Tibial artery (tissue), 4 donors: ENCODE measurements at regions of chr11 and their contacts with region 1.

Region 1: DNA sequence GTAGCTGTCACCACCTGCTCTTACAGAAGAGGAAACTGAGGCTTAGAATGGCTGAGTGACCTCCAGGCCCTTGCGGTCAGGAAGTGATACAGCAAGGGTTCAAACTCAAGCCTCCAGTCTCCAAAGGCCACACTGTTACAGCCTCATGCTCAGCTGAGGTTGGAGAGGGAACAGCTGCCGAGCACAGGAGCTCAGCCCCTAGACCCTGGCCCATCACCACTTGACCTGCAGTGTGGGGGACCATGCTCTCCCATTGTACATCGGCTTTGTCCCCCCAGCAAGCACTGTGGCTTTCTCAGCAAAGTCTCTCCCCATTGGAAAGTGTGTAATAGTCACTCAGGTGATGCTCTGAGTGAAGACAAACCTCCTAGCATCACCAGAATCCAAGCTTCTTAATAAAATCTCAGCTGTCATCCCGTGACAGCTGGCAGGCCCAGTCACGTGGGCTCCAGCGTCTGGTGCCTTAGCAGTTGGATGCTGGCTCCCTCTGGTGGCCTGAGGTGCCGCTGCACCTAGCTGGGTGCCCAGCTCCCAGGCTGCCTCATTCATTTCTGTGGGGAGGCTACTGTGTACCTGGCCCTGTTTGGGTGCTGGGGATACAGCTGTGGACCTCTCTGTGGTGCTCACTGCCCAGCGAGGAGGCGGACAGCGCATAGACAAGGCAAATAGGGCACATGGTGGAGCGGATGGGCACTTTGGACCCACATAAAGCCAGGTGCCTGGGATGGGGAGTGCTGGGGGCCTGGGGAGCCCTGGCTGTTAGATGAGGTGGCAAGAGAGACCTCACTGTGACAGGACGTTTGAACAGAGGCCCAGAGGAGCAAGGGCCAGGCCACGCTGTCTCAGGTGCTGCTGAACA is 19.1 kb upstream of the MYRF start:
- DNase-seq: peak; percentile 91 to 92
- H3K4me3 ChIP-seq: no peak overlapping the region
- H3K27ac ChIP-seq: peak overlapping the region; percentile 17 to 67
- H3K4me1 ChIP-seq: peaks cover 0 to 23% (median 8%) of the 10 kb centered on the region in 4 donors
- H3K27me3 ChIP-seq: no peaks in the 10 kb centered on the region
- CTCF ChIP-seq: peak; percentile 99

Region 2: DNA sequence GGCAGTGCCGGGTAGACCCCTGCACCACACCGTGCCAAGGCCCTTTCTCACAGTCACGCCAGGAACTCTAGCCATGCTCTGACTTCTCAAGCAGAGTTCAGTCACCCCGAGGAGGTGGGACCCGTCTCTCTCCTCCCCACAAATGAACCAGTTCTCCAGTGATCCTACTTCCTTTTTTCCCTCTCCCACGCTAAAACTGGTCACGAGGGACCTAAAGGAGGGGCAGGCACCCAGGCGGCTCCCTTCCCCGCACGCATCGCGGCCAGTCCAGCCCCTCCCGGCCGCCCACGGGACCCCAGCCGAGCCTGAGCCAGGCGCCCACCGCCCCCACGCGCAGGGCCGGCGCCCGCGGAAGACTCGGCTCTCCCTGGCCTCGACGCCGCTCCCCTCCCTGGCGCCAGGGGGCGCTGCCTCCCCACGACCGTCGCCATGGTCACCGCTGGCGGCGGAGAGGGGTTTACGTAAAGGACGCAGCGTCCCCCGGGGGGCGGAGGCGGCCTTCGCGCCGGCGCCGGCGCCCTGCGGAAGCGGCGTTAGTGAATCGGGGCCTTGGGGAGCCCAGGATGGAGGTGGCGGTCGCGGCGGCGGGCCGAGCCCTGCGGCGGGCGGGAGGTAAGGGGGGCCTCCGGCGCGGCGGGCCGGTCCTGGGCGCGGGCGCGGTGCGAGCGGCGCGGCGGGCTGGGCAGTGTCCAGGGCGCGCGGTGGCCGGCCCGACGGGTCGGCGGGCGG is 53.3 kb before region 1 on chr11 and contains the start of gene DAGLA:
- intact Hi-C with region 1: loop called (anchors 2 kb)
- DNase-seq: peak; percentile 53 to 76
- H3K4me3 ChIP-seq: peak within 1 kb of the TSS; percentile 48 to 55
- H3K27ac ChIP-seq: no peak within 1 kb of the TSS
- H3K4me1 ChIP-seq: peaks cover 0 to 25% (median 8%) of the 10 kb centered on the region in 4 donors
- H3K27me3 ChIP-seq: peaks cover 0 to 71% of the 10 kb centered on the region in 2 donors
- CTCF ChIP-seq: peak; percentile 92 to 97

Region 3: DNA sequence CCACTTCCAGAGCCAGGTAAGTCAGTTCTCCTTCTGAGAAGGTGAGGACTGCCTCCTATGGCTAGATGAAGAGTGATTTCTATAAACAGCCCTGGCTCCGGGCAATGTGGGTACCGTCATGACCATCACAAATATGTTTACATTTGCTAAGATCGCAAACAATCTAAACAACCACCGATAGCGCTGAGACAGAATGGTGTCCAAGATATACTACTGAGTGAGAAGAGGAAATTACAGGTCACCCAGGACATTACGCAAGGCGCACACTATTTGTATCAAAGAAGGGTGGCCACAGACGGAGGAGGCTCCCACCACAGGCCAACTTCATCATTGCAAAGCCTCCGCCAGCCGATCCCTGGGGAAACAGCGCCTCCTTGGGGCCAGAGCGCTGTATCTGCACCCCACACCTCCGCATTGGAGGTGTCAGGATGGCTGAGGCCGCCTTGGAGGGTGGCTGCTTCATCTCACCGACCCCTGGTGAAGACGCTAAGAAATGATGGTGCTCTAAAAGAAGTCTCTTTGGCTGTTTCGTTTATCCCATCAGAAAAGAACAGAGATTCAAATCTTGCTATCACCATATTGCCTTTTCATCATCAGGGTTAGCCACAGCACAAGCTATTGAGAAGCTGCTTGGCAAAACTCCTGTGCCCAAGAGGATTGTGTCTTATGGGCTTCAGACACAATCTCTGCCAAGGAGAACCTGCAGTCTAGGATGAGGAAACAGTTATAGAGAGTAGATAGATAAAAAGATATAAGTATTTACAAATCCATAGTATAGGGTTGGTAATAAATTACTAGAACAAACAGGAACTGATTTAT is 591.6 kb after region 1 on chr11:
- intact Hi-C with region 1: no loop called
- DNase-seq: peak in 1 of 2 donors; percentile 30
- H3K4me3 ChIP-seq: no peak overlapping the region
- H3K27ac ChIP-seq: no peak overlapping the region
- H3K4me1 ChIP-seq: no peaks in the 10 kb centered on the region
- H3K27me3 ChIP-seq: peaks cover 0 to 27% of the 10 kb centered on the region in 2 donors
- CTCF ChIP-seq: peak; percentile 38 to 39